ENCODE measurements at regions of chr5 and their contacts with region 1.

Region 1: DNA sequence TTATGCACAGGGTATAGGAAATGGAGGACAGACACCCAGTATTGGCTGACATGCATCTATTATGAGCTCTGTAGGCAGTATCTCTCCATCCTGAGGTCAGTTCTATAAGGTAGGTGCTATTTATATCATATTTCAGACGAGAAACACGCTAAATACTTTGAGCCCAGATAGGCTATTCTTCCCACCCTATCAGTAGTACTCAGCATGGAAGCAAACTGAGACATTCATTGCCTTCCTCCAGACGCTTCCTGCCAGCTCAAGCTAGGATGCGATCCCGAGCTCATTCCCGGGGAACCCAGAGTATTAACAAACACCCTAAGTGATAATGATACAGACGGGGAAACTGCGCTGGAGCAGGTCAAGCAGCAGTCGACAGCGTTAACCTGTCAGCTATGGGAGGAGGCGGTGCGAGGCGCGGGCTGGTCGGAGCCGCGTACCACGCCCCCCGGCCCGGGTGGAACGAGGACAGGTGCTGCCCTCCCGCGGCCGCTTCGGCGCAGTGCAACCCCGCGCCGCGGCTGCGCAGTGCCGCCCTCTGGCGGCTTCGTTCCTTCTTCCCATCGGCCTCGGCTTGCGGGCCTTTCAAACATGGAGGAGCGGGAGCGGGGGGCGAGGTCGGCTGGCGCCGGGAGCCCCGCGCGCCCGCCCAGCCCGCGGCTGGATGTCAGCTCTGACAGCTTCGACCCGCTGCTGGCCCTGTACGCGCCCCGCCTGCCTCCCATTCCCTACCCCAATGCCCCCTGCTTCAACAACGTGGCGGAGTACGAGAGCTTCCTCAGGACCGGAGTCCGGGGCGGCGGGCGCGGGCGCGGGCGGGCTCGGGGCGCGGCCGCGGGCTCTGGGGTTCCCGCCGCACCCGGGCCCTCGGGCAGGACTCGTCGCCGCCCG is at the start of gene LSM11:
- H3K4me3 ChIP-seq: peak within 1 kb of the TSS; percentile 89
- H3K27ac ChIP-seq: peak within 1 kb of the TSS; percentile 71; the same call in 1 of the 2 replicates
- H3K4me1 ChIP-seq: peaks cover 14% of the 10 kb centered on the region; the same call in 1 of the 2 replicates
- CTCF ChIP-seq: peak; percentile 99

Region 2: GRCh38 chr5:157328277-157328912 is 415.0 kb before region 1 on chr5:
- CTCF ChIA-PET with region 1: interaction called, 14 read pairs
- POLR2A ChIA-PET with region 1: no interaction called
- H3K4me3 ChIP-seq: no peak overlapping the region
- H3K27ac ChIP-seq: no peak overlapping the region
- H3K4me1 ChIP-seq: no peaks in the 10 kb centered on the region
- CTCF ChIP-seq: peak; percentile 79

Region 3: DNA sequence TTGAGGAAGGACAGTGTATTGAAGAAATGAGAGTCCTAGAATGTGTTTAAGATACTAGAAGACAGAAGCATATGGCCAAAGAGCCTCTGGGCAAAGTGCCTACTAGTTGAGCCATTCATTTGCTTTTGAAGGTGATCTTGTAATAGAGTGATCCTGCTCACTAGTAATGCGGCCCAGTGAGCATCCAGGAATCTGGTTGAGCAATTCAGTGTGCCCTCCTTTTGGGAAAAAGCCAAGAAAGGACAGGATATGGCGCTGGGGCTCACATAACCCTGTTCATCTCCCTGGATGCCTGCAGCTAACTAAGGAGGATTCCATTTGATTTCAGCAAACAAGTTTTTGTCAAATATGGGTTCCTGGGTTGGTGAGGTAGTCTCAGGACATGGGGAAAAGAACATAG is 184.1 kb before region 1 on chr5:
- CTCF ChIA-PET with region 1: no interaction called
- POLR2A ChIA-PET with region 1: no interaction called
- H3K4me3 ChIP-seq: no peak overlapping the region
- H3K27ac ChIP-seq: no peak overlapping the region
- H3K4me1 ChIP-seq: no peaks in the 10 kb centered on the region
- CTCF ChIP-seq: no peak

Region 4: GRCh38 chr5:157571357-157571827 is 172.0 kb before region 1 on chr5:
- CTCF ChIA-PET with region 1: no interaction called
- POLR2A ChIA-PET with region 1: no interaction called
- H3K4me3 ChIP-seq: no peak overlapping the region
- H3K27ac ChIP-seq: no peak overlapping the region
- H3K4me1 ChIP-seq: no peaks in the 10 kb centered on the region; the same call in 1 of the 2 replicates
- CTCF ChIP-seq: no peak

Region 5: DNA sequence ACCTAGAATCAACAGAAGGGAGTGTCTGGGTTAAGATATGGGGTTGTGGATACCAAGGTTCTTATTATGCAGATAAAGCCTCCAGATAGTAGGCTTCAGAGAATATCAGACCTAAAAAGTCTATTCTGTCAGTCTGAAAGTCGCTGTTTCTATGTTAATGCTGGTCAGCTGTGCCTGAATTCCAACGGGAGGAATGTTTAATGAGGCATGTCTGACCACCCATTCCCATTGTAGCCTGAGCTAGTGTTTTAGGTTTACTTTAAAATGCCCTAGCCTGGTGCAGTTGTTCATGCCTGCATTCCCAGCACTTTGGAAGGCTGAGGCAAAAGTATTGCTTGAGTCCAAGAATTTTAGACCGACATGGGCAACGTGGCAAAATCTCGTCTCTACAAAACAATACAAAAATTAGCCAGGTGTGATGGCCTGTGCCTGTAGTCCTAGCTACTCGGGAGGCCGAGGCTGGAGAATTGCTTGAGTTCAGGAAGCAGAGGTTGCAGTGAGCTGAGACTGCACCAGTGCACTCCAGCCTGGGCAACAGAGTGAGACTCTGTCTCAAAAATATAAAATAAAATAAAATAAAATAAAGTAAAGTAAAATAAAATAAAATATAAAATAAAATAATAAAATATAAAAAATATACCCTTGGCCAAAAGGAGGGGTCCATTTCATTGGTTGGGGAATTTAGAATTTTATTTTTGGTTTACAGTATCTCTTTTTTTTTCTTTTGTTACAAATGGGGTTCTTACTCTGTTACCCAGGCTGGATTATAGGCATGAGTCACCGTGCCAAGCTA is 83.3 kb before region 1 on chr5:
- CTCF ChIA-PET with region 1: interaction called, 12 read pairs
- POLR2A ChIA-PET with region 1: no interaction called
- H3K4me3 ChIP-seq: no peak overlapping the region
- H3K27ac ChIP-seq: no peak overlapping the region
- H3K4me1 ChIP-seq: no peaks in the 10 kb centered on the region
- CTCF ChIP-seq: no peak

Region 6: GRCh38 chr5:157670662-157671591 is 72.5 kb before region 1 on chr5 and contains the start of gene C5orf52:
- CTCF ChIA-PET with region 1: interaction called, 20 read pairs
- POLR2A ChIA-PET with region 1: interaction called, 4 read pairs
- H3K4me3 ChIP-seq: peak within 1 kb of the TSS; percentile 53
- H3K27ac ChIP-seq: peak within 1 kb of the TSS; percentile 39; the same call in 1 of the 2 replicates
- H3K4me1 ChIP-seq: peaks cover 7% of the 10 kb centered on the region
- CTCF ChIP-seq: no peak

Region 7: GRCh38 chr5:157718519-157718918 is 24.9 kb before region 1 on chr5:
- CTCF ChIA-PET with region 1: interaction called, 17 read pairs
- POLR2A ChIA-PET with region 1: no interaction called
- H3K4me3 ChIP-seq: no peak overlapping the region
- H3K27ac ChIP-seq: no peak overlapping the region
- H3K4me1 ChIP-seq: no peaks in the 10 kb centered on the region
- CTCF ChIP-seq: 0 out of 2 replicates have a peak, but pooled peaks have one; percentile 17

Region 8: GRCh38 chr5:157731272-157732129 is 11.9 kb before region 1 on chr5 and contains the start of gene THG1L:
- CTCF ChIA-PET with region 1: interaction called, 49 read pairs
- POLR2A ChIA-PET with region 1: interaction called, 6 read pairs
- H3K4me3 ChIP-seq: peak within 1 kb of the TSS; percentile 89
- H3K27ac ChIP-seq: 0 out of 2 replicates have a peak within 1 kb of the TSS, but pooled peaks have one; percentile 11
- H3K4me1 ChIP-seq: no peaks in the 10 kb centered on the region
- CTCF ChIP-seq: no peak

Region 9: DNA sequence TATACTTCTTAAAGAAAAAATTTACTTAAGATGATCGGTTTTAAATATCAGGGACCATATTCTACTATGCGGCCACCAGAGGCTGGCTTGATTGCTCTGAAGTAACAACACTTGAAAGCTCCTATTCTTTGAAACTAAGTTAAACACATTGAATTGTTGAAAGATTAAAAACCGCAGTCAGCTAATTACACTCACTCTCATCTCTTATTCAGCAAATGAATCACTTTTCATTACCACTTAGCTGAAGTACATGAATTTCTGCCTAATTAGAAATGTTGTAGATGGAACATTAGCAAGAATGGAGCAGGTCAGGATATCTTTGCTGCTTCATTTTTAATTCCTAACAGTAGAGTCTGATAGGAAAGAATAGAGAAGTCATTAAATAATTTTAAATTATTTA is 42.4 kb after region 1 on chr5:
- CTCF ChIA-PET with region 1: no interaction called
- POLR2A ChIA-PET with region 1: no interaction called
- H3K4me3 ChIP-seq: no peak overlapping the region
- H3K27ac ChIP-seq: no peak overlapping the region
- H3K4me1 ChIP-seq: peaks cover 7% of the 10 kb centered on the region; the same call in 1 of the 2 replicates
- CTCF ChIP-seq: no peak

Measured in HEK293 (cell line).